Ovary (tissue), 10 donors: ENCODE measurements at regions of chr1 and their contacts with region 1.

Region 1: DNA sequence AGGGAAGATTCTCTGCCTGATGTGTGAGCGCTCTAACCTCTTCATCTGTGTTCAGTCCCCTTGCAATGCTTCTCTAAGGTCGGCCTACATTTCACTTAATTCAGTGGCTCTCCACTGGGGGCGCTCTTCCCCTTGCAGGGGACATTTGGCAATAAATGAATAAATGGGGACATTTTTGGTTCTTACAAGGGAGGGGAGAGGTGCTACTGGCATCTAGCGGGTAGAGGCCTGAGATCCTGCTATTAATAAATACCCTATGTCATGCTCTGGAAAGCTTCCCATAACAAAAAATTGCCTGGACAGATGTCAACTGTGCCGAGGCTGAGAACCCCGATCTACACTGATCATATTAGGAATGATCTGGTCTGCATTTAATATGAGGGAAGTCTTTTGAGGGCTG is 25.9 kb upstream of the DNAJC11 start:
- DNase-seq: peak in 1 of 5 donors; percentile 23
- H3K4me3 ChIP-seq: no peak overlapping the region
- H3K27ac ChIP-seq: no peak overlapping the region
- H3K4me1 ChIP-seq: no peaks in the 10 kb centered on the region
- H3K27me3 ChIP-seq: no peaks in the 10 kb centered on the region
- CTCF ChIP-seq: peak in 2 of 3 donors; percentile 12 to 21
- EP300 ChIP-seq: no peak
- POLR2A ChIP-seq: no peak

Region 2: DNA sequence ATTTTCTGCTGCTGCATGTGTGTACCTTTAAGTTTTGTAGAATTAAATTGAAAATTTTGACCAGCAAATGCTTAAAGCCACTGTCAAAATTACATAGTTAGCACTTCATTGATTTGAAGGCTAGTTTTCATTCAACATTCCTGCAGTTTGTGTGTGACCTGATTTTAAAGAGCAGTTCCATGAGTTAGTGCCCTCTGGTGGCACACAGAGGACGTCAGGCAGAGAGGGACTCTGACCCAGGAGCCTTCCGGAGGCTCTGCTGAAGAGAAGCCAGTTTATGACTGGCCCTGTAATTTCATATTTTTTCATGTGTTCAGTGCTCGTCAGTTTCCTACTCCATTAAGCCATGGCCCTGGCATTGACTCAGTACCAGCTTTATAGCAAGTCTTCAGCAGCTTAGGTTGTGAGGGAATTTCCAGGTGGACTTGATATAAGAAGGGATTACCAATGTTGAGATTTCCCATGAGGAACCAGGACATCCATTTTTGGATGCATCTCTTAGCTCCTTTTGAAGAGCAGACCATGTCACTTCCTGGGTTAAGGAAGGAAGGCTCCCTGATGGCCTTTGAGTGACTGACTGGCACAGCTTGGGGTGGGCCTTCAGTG is 162.4 kb after region 1 on chr1:
- intact Hi-C with region 1: loop called in 1 of 4 experiments (anchors 10 kb)
- DNase-seq: peak in 4 of 5 donors; percentile 39 to 58 (median 54)
- H3K4me3 ChIP-seq: no peak overlapping the region
- H3K27ac ChIP-seq: no peak overlapping the region
- H3K4me1 ChIP-seq: no peaks in the 10 kb centered on the region
- H3K27me3 ChIP-seq: no peaks in the 10 kb centered on the region
- CTCF ChIP-seq: peak; percentile 19 to 48 (median 22)
- EP300 ChIP-seq: no peak
- POLR2A ChIP-seq: no peak

Region 3: GRCh38 chr1:6984986-6985385 is 257.5 kb after region 1 on chr1:
- intact Hi-C with region 1: no loop called
- DNase-seq: no peak
- H3K4me3 ChIP-seq: no peak overlapping the region
- H3K27ac ChIP-seq: no peak overlapping the region
- H3K4me1 ChIP-seq: no peaks in the 10 kb centered on the region
- H3K27me3 ChIP-seq: no peaks in the 10 kb centered on the region
- CTCF ChIP-seq: no peak
- EP300 ChIP-seq: no peak
- POLR2A ChIP-seq: no peak

Region 4: GRCh38 chr1:7070389-7071029 is 343.0 kb after region 1 on chr1:
- intact Hi-C with region 1: loop called in 3 of 4 experiments (anchors 5 to 10 kb)
- DNase-seq: peak; percentile 64 to 72 (median 70)
- H3K4me3 ChIP-seq: peak overlapping the region; percentile 9
- H3K27ac ChIP-seq: no peak overlapping the region
- H3K4me1 ChIP-seq: no peaks in the 10 kb centered on the region
- H3K27me3 ChIP-seq: no peaks in the 10 kb centered on the region
- CTCF ChIP-seq: peak; percentile 51 to 68 (median 64)
- EP300 ChIP-seq: no peak
- POLR2A ChIP-seq: no peak

Region 5: DNA sequence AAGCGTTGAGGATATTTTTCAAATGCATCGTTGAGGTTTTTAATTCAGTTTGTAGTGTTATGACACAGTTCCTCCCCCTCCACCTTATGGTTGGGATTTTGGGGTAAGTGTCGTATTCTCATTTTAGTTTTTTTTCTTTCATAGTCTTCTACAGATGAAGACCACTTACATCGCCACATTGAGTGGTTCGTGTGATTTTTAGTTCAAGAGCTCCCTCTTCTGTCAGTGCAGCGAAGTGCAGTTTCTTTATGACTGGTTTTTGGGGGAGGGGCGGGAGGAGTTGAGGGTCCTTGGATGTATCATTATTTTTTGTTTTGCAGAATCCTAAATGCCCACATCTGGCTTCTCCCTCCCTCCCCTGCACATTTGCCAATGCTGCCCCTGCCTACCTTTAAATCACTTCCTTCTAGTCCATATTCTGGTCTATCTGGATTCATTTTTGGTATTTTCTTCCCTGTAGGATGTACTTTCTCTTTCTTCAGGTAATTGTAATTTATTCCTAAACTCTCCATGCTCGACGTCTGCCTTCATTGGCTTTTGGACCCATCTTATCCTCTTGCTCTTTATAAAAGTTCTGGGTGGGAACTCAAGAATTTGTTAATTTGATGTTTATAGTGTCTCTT is 490.8 kb after region 1 on chr1:
- intact Hi-C with region 1: loop called in 2 of 4 experiments (anchors 10 kb)
- DNase-seq: peak in 1 of 5 donors; percentile 30
- H3K4me3 ChIP-seq: no peak overlapping the region
- H3K27ac ChIP-seq: no peak overlapping the region
- H3K4me1 ChIP-seq: no peaks in the 10 kb centered on the region
- H3K27me3 ChIP-seq: no peaks in the 10 kb centered on the region
- CTCF ChIP-seq: peak in 1 of 3 donors; percentile 26
- EP300 ChIP-seq: no peak
- POLR2A ChIP-seq: no peak

Region 6: DNA sequence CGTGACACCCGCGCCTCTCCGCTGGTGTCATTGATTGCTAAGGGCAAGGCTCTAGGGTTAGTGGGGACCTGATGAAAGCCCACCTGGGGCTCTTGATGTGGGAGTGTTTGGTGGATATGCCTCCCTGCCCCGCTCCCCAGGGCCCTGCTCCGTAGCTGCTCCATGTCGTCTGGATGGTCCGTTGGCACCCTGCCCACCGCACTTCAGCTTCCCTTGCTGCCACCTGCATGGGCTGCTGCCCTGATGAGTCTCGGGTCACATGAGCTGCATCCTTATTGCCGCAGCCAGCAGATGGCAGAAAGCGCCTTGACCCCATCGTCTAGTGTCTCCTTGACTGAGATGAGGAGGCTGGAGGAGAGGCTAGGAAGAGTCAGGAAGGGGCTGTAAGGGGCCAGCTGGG is 497.1 kb after region 1 on chr1:
- intact Hi-C with region 1: loop called in 2 of 4 experiments (anchors 10 kb)
- DNase-seq: no peak
- H3K4me3 ChIP-seq: no peak overlapping the region
- H3K27ac ChIP-seq: no peak overlapping the region
- H3K4me1 ChIP-seq: no peaks in the 10 kb centered on the region
- H3K27me3 ChIP-seq: no peaks in the 10 kb centered on the region
- CTCF ChIP-seq: no peak
- EP300 ChIP-seq: no peak
- POLR2A ChIP-seq: no peak

Region 7: GRCh38 chr1:7646981-7647901 is 919.7 kb after region 1 on chr1:
- intact Hi-C with region 1: loop called (anchors 5 to 10 kb)
- DNase-seq: peak; percentile 44 to 84 (median 78)
- H3K4me3 ChIP-seq: no peak overlapping the region
- H3K27ac ChIP-seq: no peak overlapping the region
- H3K4me1 ChIP-seq: no peaks in the 10 kb centered on the region
- H3K27me3 ChIP-seq: no peaks in the 10 kb centered on the region
- CTCF ChIP-seq: peak; percentile 80 to 91 (median 89)
- EP300 ChIP-seq: no peak
- POLR2A ChIP-seq: no peak

Region 8: GRCh38 chr1:8456308-8456912 is 1728.9 kb after region 1 on chr1:
- intact Hi-C with region 1: loop called in 1 of 4 experiments (anchors 5 kb)
- DNase-seq: no peak
- H3K4me3 ChIP-seq: no peak overlapping the region
- H3K27ac ChIP-seq: peak overlapping the region in 1 of 2 donors; percentile 6
- H3K4me1 ChIP-seq: peaks cover 12% of the 10 kb centered on the region
- H3K27me3 ChIP-seq: no peaks in the 10 kb centered on the region
- CTCF ChIP-seq: no peak
- EP300 ChIP-seq: no peak
- POLR2A ChIP-seq: no peak